BJ (cell line): ENCODE measurements at regions of chr16 and their contacts with region 1.

Region 1: GRCh38 chr16:30728899-30729672 is 19.1 kb upstream of the PHKG2 start:
- DNase-seq: no peak
- H3K4me3 ChIP-seq: no peak overlapping the region
- H3K27me3 ChIP-seq: no peaks in the 10 kb centered on the region
- CTCF ChIP-seq: no peak

Region 2: GRCh38 chr16:30659507-30660423 is 69.3 kb before region 1 on chr16:
- CTCF ChIA-PET with region 1: no interaction called
- POLR2A ChIA-PET with region 1: no interaction called
- DNase-seq: no peak
- H3K4me3 ChIP-seq: peak overlapping the region; percentile 90
- H3K27me3 ChIP-seq: no peaks in the 10 kb centered on the region
- CTCF ChIP-seq: no peak

Region 3: GRCh38 chr16:30715737-30716445 is 13.2 kb before region 1 on chr16:
- CTCF ChIA-PET with region 1: no interaction called
- POLR2A ChIA-PET with region 1: interaction called, 13 read pairs
- DNase-seq: no peak
- H3K4me3 ChIP-seq: no peak overlapping the region
- H3K27me3 ChIP-seq: no peaks in the 10 kb centered on the region
- CTCF ChIP-seq: no peak

Region 4: DNA sequence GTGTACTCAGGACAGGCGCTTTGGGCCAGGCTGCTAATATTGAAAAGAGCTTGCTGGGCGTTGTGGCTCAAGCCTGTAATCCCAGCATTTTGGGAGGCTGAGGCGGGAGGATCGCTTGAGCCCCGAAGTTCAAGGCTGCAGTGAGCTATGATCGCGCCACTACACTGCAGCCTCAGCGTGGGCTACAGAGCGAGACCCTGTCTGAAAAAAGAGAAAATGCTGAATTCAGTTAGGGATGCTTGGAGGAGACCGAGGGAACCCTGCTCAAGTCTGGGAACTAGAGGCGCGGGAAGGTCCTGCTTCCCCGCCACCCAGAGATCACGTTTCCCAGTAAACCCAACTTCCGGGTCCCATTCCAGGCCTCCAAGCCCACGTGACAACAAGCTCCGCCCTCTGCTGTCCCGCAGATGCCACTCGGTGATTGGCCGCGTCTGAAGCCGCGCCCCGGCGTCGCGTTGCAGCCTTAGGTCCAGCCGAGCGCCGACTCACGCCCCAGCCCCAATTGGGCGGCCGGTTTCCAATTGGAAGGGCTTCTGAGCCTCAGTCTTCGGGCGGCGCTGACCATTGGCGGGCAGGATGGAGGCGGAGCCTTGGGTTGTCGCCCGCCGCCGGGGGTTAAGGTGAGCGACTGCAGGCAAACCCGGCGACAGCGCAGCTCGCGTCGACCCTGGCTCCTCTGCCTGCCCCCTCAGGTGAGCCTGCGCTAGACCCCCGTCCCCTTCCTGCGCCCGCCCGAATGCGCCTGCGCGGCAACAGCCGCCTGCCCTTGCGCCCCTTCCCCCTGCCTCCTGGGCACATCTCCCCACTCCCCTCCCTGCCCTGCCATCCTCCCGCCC is 18.9 kb after region 1 on chr16 and contains the start of gene PHKG2:
- CTCF ChIA-PET with region 1: no interaction called
- POLR2A ChIA-PET with region 1: no interaction called
- DNase-seq: peak; percentile 95
- H3K4me3 ChIP-seq: peak within 1 kb of the TSS; percentile 99
- H3K27me3 ChIP-seq: no peaks in the 10 kb centered on the region
- CTCF ChIP-seq: no peak
- polyA plus RNA-seq, gene PHKG2: 24.9 and 32.4 TPM in 2 replicates